ENCODE measurements at regions of chr1 and their contacts with region 1.

Region 1: GRCh38 chr1:30111431-30111830 is 612.0 kb downstream of the MATN1 start:
- DNase-seq: peak in 1 of 2 experiments; percentile 38
- H3K4me3 ChIP-seq: no peak overlapping the region
- H3K27ac ChIP-seq: no peak overlapping the region
- H3K4me1 ChIP-seq: no peaks in the 10 kb centered on the region
- H3K27me3 ChIP-seq: peaks cover 53% of the 10 kb centered on the region
- CTCF ChIP-seq: peak; percentile 57

Region 2: GRCh38 chr1:29703596-29704370 is 407.6 kb before region 1 on chr1:
- CTCF ChIA-PET with region 1: no interaction called
- POLR2A ChIA-PET with region 1: no interaction called
- intact Hi-C with region 1: loop called (anchors 10 kb)
- DNase-seq: peak; percentile 19 to 41
- H3K4me3 ChIP-seq: no peak overlapping the region
- H3K27ac ChIP-seq: no peak overlapping the region
- H3K4me1 ChIP-seq: peaks cover 11% of the 10 kb centered on the region
- H3K27me3 ChIP-seq: no peaks in the 10 kb centered on the region
- CTCF ChIP-seq: peak; percentile 79

Region 3: DNA sequence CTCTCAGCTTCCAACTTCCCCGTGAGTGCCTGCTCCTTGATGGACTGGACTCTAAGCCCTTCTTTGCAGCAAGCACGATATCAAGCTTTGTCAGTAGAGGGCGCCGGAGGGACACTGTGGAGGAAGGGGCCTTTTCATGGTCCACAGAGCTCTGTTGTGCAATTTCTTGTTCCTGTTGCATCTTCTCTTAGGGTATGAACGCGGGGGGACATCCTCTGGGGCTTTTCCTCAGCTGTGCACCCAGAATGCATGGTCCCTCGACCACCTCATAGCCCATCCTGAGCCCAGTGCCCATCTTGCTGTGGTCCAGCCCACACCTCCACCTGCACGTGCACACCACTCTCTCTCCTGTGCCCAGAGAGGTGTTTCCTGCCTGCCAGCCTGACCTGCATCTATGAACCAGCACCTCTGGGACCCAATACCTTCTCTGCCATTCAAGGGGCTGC is 318.3 kb before region 1 on chr1:
- CTCF ChIA-PET with region 1: no interaction called
- POLR2A ChIA-PET with region 1: no interaction called
- intact Hi-C with region 1: loop called (anchors 2 kb)
- DNase-seq: peak; percentile 55 to 71
- H3K4me3 ChIP-seq: no peak overlapping the region
- H3K27ac ChIP-seq: no peak overlapping the region
- H3K4me1 ChIP-seq: peaks cover 17% of the 10 kb centered on the region; the same call in 1 of the 2 replicates
- H3K27me3 ChIP-seq: no peaks in the 10 kb centered on the region
- CTCF ChIP-seq: peak; percentile 77

Region 4: GRCh38 chr1:30008998-30009657 is 102.3 kb before region 1 on chr1:
- CTCF ChIA-PET with region 1: no interaction called
- POLR2A ChIA-PET with region 1: no interaction called
- intact Hi-C with region 1: no loop called
- DNase-seq: peak; percentile 41 to 70
- H3K4me3 ChIP-seq: no peak overlapping the region
- H3K27ac ChIP-seq: no peak overlapping the region
- H3K4me1 ChIP-seq: peaks cover 58% of the 10 kb centered on the region
- H3K27me3 ChIP-seq: no peaks in the 10 kb centered on the region
- CTCF ChIP-seq: no peak

Region 5: DNA sequence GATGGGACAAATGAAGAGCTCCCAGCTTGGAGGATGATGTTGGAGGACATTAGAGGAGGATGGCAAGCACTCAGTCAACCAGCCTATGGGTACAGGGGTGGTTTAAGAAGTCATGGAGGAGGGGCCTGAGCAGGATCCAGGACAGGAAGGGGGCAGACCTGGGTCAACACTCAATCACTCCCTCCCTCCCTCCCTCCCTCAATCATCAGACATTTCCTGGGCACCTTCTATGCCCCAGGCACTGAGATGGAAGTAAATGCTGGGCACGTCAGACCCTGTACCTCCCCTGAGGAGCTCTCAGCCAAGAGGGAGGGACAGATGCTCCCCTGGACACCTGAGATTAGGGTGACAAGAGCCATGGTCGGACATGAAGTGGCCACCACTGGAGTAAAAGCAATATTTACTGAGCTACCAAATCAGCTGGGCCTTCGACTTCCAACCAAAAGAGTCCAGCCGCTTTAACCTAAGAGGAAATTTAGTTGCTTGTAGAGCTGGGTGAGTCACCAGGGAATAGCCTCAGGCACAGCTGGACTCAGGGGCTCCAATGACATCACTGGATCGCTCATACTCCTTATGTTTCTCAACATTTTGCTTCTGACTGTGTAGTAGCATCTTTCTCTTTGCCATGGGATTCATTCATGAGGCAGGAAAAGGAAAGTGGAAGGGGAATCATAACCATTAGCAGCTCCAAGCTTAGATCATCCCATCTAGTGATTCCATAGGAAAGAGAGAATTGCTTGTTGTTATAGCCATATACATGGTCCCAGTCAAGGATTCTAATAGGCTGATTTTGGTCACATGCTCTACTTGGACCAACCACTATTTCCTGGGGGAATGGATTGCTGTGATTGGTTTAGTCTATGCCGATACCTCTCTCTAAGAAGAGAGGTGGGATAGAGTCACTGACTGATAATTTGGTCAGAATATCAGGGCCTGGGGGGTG is 52.5 kb before region 1 on chr1:
- CTCF ChIA-PET with region 1: no interaction called
- POLR2A ChIA-PET with region 1: no interaction called
- intact Hi-C with region 1: no loop called
- DNase-seq: peak; percentile 73 to 86
- H3K4me3 ChIP-seq: no peak overlapping the region
- H3K27ac ChIP-seq: peak overlapping the region; percentile 41; the same call in 1 of the 2 replicates
- H3K4me1 ChIP-seq: peaks cover 34% of the 10 kb centered on the region
- H3K27me3 ChIP-seq: no peaks in the 10 kb centered on the region
- CTCF ChIP-seq: no peak

Region 6: GRCh38 chr1:30138891-30139290 is 27.5 kb after region 1 on chr1:
- CTCF ChIA-PET with region 1: interaction called, 10 read pairs
- POLR2A ChIA-PET with region 1: no interaction called
- intact Hi-C with region 1: no loop called
- DNase-seq: no peak
- H3K4me3 ChIP-seq: no peak overlapping the region
- H3K27ac ChIP-seq: no peak overlapping the region
- H3K4me1 ChIP-seq: no peaks in the 10 kb centered on the region
- H3K27me3 ChIP-seq: peaks cover 64% of the 10 kb centered on the region
- CTCF ChIP-seq: no peak

Measured in PC-9 (cell line).